PC-3 (cell line): ENCODE measurements at regions of chr7 and their contacts with region 1.

Region 1: GRCh38 chr7:135672560-135673359 is 10.4 kb downstream of the STMP1 start:
- DNase-seq: peak; percentile 75
- ATAC-seq: peak; percentile 84
- H3K4me3 ChIP-seq: peak overlapping the region; percentile 19; the same call in 1 of the 2 replicates
- H3K27ac ChIP-seq: peak overlapping the region; percentile 57
- H3K4me1 ChIP-seq: peaks cover 27% of the 10 kb centered on the region
- H3K27me3 ChIP-seq: no peaks in the 10 kb centered on the region
- CTCF ChIP-seq: peak; percentile 90

Region 2: GRCh38 chr7:135300913-135301765 is 371.6 kb before region 1 on chr7:
- CTCF ChIA-PET with region 1: no interaction called
- POLR2A ChIA-PET with region 1: no interaction called
- intact Hi-C with region 1: no loop called
- DNase-seq: no peak
- ATAC-seq: no peak
- H3K4me3 ChIP-seq: no peak overlapping the region
- H3K27ac ChIP-seq: no peak overlapping the region
- H3K4me1 ChIP-seq: no peaks in the 10 kb centered on the region
- H3K27me3 ChIP-seq: no peaks in the 10 kb centered on the region
- CTCF ChIP-seq: no peak

Region 3: GRCh38 chr7:135729230-135729629 is 56.5 kb after region 1 on chr7:
- CTCF ChIA-PET with region 1: no interaction called
- POLR2A ChIA-PET with region 1: no interaction called
- intact Hi-C with region 1: no loop called
- DNase-seq: no peak
- ATAC-seq: no peak
- H3K4me3 ChIP-seq: no peak overlapping the region
- H3K27ac ChIP-seq: no peak overlapping the region
- H3K4me1 ChIP-seq: 0 out of 2 replicates have a peak, but pooled peaks cover 6% of the 10 kb centered on the region
- H3K27me3 ChIP-seq: no peaks in the 10 kb centered on the region
- CTCF ChIP-seq: no peak

Region 4: DNA sequence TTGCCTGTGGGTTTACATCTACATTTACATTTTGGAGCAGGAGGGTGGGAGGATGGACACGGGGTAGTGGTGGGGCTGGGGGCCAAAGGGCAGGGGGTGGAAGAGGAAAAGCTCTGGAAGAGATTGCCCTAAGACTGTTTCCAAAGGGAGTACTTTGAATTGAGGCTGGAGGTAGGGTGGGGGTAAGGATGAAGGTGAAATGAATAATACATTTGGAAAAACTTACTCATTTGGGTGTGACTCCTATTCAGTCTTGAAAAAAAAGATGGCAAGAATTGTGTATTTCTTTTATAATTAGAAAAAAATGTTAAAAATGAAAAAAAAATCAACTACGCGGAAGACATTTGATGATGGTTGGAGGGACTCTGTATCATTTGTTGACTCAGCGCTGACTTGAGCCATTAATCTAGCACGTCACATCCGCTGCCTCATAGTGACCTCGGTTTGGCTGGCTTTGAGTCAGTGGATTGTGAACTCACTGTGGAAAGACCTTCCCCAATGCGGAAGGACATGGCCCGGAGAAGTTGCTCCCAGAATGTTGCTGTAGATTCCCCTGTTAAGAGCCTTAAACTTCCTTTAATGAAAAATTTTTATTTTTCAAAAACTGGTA is 73.0 kb after region 1 on chr7:
- CTCF ChIA-PET with region 1: no interaction called
- POLR2A ChIA-PET with region 1: no interaction called
- intact Hi-C with region 1: loop called (anchors 2 kb)
- DNase-seq: peak; percentile 95
- ATAC-seq: peak; percentile 82
- H3K4me3 ChIP-seq: peak overlapping the region; percentile 48
- H3K27ac ChIP-seq: peak overlapping the region; percentile 99
- H3K4me1 ChIP-seq: peaks cover 29% of the 10 kb centered on the region
- H3K27me3 ChIP-seq: no peaks in the 10 kb centered on the region
- CTCF ChIP-seq: no peak

Region 5: GRCh38 chr7:135801045-135801693 is 128.4 kb after region 1 on chr7:
- CTCF ChIA-PET with region 1: interaction called, 9 read pairs
- POLR2A ChIA-PET with region 1: interaction called, 6 read pairs
- intact Hi-C with region 1: loop called (anchors 1 kb)
- DNase-seq: peak; percentile 80
- ATAC-seq: peak; percentile 64
- H3K4me3 ChIP-seq: 0 out of 2 replicates have a peak overlapping the region, but pooled peaks have one; percentile 6
- H3K27ac ChIP-seq: no peak overlapping the region
- H3K4me1 ChIP-seq: no peaks in the 10 kb centered on the region
- H3K27me3 ChIP-seq: no peaks in the 10 kb centered on the region
- CTCF ChIP-seq: peak; percentile 88

Region 6: GRCh38 chr7:136009488-136010079 is 336.8 kb after region 1 on chr7:
- CTCF ChIA-PET with region 1: no interaction called
- POLR2A ChIA-PET with region 1: no interaction called
- intact Hi-C with region 1: loop called (anchors 1 kb)
- DNase-seq: peak; percentile 76
- ATAC-seq: 0 out of 2 replicates have a peak, but pooled peaks have one; percentile 37
- H3K4me3 ChIP-seq: no peak overlapping the region
- H3K27ac ChIP-seq: no peak overlapping the region
- H3K4me1 ChIP-seq: no peaks in the 10 kb centered on the region
- H3K27me3 ChIP-seq: peaks cover 23% of the 10 kb centered on the region
- CTCF ChIP-seq: peak; percentile 80